PC-3 (cell line): ENCODE measurements at regions of chr7 and their contacts with region 1.

Region 1: GRCh38 chr7:22001345-22002004 is 55.8 kb upstream of the CDCA7L start:
- DNase-seq: peak; percentile 80
- ATAC-seq: peak; percentile 85
- H3K4me3 ChIP-seq: peak overlapping the region; percentile 36; the same call in 1 of the 2 replicates
- H3K27ac ChIP-seq: no peak overlapping the region
- H3K4me1 ChIP-seq: no peaks in the 10 kb centered on the region
- H3K27me3 ChIP-seq: peaks cover 32% of the 10 kb centered on the region
- CTCF ChIP-seq: peak; percentile 85

Region 2: DNA sequence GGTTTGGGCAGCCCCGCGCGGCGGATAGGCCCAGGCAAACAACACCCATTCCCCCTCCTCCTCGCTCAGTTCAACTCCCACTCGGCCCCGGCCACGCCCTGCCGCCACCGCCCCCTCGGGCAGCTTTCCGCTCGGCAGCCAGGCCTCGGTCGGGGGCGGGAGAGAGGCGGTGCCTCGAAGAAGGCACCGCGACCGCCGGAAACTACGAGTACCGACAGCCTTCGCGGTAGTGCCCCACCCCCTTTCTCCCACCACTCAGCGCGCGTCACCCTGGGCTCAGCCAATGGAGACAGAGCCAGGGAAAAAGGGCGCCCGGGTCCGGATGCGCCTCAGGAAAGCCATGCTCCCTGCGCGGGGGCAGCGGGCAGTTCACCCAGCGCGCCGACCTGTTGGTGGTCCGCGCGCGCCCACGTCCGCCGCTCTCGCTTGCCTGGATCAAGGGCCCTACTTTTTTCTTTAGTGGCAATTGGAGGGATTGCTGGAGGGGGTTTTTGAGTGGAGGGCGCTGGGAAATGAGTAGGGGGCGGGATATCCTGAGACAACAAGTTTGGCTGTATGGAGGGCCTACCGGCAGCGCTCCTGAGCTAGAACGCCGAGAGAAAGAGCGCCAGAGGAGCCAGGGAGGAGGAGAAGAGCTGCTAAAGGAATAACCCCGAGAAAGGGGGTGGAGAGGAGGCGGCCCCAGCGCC is 574.1 kb before region 1 on chr7:
- CTCF ChIA-PET with region 1: no interaction called
- POLR2A ChIA-PET with region 1: no interaction called
- intact Hi-C with region 1: loop called (anchors 5 kb)
- DNase-seq: peak; percentile 96
- ATAC-seq: peak; percentile 75
- H3K4me3 ChIP-seq: peak overlapping the region; percentile 74
- H3K27ac ChIP-seq: peak overlapping the region; percentile 82
- H3K4me1 ChIP-seq: peaks cover 10% of the 10 kb centered on the region
- H3K27me3 ChIP-seq: no peaks in the 10 kb centered on the region
- CTCF ChIP-seq: no peak

Region 3: GRCh38 chr7:21580073-21580521 is 421.4 kb before region 1 on chr7:
- CTCF ChIA-PET with region 1: no interaction called
- POLR2A ChIA-PET with region 1: no interaction called
- intact Hi-C with region 1: loop called (anchors 2 kb)
- DNase-seq: peak; percentile 65
- ATAC-seq: peak; percentile 91
- H3K4me3 ChIP-seq: no peak overlapping the region
- H3K27ac ChIP-seq: peak overlapping the region; percentile 7; the same call in 1 of the 2 replicates
- H3K4me1 ChIP-seq: peaks cover 11% of the 10 kb centered on the region; the same call in 1 of the 2 replicates
- H3K27me3 ChIP-seq: peaks cover 3% of the 10 kb centered on the region; the same call in 1 of the 2 replicates
- CTCF ChIP-seq: no peak

Region 4: DNA sequence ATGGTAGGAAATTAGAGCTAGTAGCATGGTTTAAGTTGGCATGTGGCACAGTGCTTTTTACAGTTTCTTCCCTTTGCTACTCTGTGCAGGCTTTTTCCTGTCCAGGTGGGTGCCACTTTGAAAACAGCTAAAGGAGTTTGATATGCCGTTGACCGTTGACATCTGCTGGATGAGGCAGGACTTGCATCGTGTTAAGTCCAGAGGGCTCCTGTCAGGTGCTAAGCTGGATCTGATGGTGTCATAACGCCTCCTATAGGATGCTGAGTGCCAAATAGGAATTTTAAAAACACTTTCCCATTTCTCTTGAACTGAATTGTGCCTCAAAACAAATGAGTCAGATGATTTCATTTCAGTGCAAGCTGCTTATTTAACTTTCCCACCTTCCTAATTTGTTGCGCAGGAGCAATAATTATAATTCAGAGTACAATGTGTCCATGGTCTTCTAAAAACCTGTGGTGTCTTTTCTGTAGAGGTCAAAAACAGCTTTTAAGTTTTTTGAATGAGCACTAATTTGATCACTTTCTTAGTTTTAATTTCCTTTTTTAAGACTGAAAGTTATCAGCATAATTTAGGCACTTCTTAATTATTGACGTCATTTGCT is 234.1 kb before region 1 on chr7:
- CTCF ChIA-PET with region 1: no interaction called
- POLR2A ChIA-PET with region 1: no interaction called
- intact Hi-C with region 1: loop called (anchors 1 kb)
- DNase-seq: peak; percentile 83
- ATAC-seq: peak; percentile 99
- H3K4me3 ChIP-seq: no peak overlapping the region
- H3K27ac ChIP-seq: no peak overlapping the region
- H3K4me1 ChIP-seq: no peaks in the 10 kb centered on the region
- H3K27me3 ChIP-seq: peaks cover 24% of the 10 kb centered on the region
- CTCF ChIP-seq: peak; percentile 90

Region 5: DNA sequence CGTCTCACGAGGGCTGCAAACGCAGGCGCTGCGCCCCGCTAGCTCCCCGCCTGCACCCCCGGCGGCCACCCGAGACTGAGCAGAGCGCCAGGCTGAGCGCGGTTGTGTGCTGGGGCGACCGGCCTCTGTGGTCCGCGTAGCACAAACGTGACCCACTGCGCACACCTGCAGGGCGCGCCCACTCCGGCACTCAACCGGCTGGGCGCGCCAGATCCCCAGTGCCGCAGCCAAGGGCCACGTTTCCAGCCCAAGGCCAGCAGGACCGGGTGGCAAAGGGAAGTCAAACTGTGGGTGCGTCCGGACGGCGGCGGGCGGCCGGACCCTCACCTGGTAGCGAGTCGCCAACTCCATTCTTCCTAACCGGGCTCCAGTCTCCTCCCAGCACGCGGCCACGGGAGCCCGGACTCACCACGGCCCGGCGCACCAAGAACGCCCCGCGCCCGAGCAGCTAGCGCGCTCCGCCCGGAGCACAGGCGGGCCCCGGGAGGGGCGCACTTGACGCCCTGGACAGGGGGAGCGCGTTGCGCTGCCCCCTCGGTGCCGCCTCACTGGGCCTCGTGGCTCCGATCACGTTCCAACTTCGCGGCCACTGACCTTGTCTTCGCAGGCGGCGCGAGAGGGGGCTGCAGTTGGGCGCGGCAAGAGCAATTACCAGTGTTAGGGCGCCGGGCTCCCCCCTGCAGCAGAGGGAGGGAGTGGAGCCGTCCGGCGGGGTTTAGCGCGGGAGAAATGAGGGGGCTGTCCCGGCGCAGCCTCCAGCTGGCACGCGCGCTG is 55.8 kb before region 1 on chr7 and contains the start of gene CDCA7L:
- CTCF ChIA-PET with region 1: no interaction called
- POLR2A ChIA-PET with region 1: no interaction called
- intact Hi-C with region 1: loop called (anchors 1 kb)
- DNase-seq: peak; percentile 75
- ATAC-seq: peak; percentile 75
- H3K4me3 ChIP-seq: peak within 1 kb of the TSS; percentile 97
- H3K27ac ChIP-seq: peak within 1 kb of the TSS; percentile 76
- H3K4me1 ChIP-seq: peaks cover 43% of the 10 kb centered on the region
- H3K27me3 ChIP-seq: no peaks in the 10 kb centered on the region
- CTCF ChIP-seq: no peak
- total RNA-seq, gene CDCA7L: 59.9 and 78.4 TPM in 2 replicates

Region 6: GRCh38 chr7:21984042-21984441 is 17.4 kb before region 1 on chr7:
- CTCF ChIA-PET with region 1: no interaction called
- POLR2A ChIA-PET with region 1: no interaction called
- intact Hi-C with region 1: no loop called
- DNase-seq: no peak
- ATAC-seq: peak; percentile 42
- H3K4me3 ChIP-seq: no peak overlapping the region
- H3K27ac ChIP-seq: no peak overlapping the region
- H3K4me1 ChIP-seq: no peaks in the 10 kb centered on the region
- H3K27me3 ChIP-seq: no peaks in the 10 kb centered on the region
- CTCF ChIP-seq: no peak